ENCODE measurements at regions of chr16 and their contacts with region 1.

Region 1: DNA sequence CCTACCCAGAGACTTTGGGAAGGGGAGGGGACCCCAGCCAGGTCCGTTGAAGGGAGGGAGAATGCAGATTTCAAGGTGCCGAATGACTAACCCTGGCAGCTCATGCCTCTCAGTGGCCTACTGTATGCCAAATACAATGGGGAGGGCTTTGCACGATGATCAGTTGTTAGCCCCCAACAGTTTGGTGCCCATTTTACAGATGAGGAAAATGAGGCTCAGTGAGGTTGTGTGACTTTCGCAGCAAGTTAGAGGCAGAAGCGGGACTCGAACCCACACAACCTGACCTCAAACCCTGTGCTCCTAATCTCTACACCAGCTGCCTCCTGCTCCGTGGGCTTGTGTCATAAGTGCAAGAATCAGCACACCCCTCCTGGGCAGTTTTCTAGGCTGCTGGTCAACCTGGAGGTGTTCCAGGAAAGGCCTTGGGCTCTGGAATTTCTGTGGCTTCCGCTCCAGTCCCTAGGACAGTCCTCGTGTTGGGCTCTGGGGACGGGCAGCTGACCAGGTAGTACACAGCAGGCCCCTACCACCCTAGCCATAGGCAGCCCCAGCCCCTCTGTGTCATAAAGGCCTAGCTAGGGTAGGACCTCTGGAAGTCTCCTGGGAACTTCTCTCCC is 11.9 kb upstream of the NAGPA start:
- DNase-seq: no peak
- ATAC-seq: no peak
- H3K4me3 ChIP-seq: no peak overlapping the region
- H3K27ac ChIP-seq: no peak overlapping the region
- H3K4me1 ChIP-seq: no peaks in the 10 kb centered on the region; a peak in 1 of 5 replicates
- H3K27me3 ChIP-seq: peaks cover 38 to 48% of the 10 kb centered on the region in 2 experiments
- CTCF ChIP-seq: no peak
- EP300 ChIP-seq: no peak
- POLR2A ChIP-seq: no peak
- RAD21 ChIP-seq: no peak

Region 2: GRCh38 chr16:5033256-5034169 is 12.1 kb before region 1 on chr16 and contains the start of gene NAGPA:
- CTCF ChIA-PET with region 1: no interaction called
- POLR2A ChIA-PET with region 1: interaction called, 10 read pairs
- in situ Hi-C with region 1: no loop called
- intact Hi-C with region 1: no loop called
- DNase-seq: peak; percentile 91 to 92 (median 92)
- ATAC-seq: peak; percentile 94
- H3K4me3 ChIP-seq: peak within 1 kb of the TSS; percentile 97
- H3K27ac ChIP-seq: peak within 1 kb of the TSS; percentile 61
- H3K4me1 ChIP-seq: peaks cover 21 to 23% of the 10 kb centered on the region in 2 experiments; a peak in 4 of 5 replicates
- H3K27me3 ChIP-seq: peaks cover 0 to 3% of the 10 kb centered on the region in 2 experiments; a peak in 1 of 5 replicates
- CTCF ChIP-seq: no peak
- EP300 ChIP-seq: peak; percentile 44; the same call in 1 of the 2 replicates
- POLR2A ChIP-seq: peak; percentile 72
- RAD21 ChIP-seq: no peak
- polyA plus RNA-seq, gene NAGPA: 0.15 to 0.53 TPM

Measured in K562 (cell line).